PC-3 (cell line): ENCODE measurements at regions of chr9 and their contacts with region 1.

Region 1: DNA sequence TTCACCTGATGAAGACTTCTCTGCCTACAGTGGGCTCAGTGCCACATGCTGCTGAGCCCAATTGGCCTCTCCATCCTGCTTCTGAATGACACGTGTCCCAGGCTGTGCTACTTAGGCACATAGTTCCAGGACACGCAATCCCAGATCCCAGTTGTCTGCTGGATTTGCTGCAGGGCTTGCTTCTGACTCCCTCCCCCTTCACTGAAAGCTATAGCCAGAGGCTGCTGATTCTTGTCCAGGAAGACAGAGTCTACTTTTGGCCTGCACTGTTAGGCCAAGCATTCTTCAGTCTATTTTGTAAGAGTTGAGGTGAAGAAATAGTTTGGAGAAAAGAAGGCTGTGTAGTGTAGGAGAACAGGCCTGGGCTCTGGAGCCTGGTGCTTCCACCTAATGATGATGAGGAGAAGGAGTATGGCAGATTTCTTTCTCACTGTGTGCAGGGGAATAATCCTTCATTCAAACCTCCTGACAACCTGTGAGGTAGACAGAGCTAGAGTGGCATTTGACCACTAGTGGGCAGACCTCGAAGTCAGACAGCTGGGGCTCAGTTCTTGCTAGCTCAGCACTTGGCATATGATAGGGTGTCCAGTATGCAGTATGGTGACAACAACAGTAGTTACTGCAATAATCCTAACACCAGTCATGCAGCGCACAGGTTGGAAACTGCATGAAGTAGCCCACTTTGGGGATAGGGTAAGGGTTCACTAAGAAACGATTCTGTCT is 19.5 kb upstream of the ASPN start:
- DNase-seq: peak; percentile 57
- ATAC-seq: peak; percentile 72
- H3K4me3 ChIP-seq: no peak overlapping the region
- H3K27ac ChIP-seq: no peak overlapping the region
- H3K4me1 ChIP-seq: peaks cover 25% of the 10 kb centered on the region
- H3K27me3 ChIP-seq: no peaks in the 10 kb centered on the region
- CTCF ChIP-seq: peak; percentile 66

Region 2: DNA sequence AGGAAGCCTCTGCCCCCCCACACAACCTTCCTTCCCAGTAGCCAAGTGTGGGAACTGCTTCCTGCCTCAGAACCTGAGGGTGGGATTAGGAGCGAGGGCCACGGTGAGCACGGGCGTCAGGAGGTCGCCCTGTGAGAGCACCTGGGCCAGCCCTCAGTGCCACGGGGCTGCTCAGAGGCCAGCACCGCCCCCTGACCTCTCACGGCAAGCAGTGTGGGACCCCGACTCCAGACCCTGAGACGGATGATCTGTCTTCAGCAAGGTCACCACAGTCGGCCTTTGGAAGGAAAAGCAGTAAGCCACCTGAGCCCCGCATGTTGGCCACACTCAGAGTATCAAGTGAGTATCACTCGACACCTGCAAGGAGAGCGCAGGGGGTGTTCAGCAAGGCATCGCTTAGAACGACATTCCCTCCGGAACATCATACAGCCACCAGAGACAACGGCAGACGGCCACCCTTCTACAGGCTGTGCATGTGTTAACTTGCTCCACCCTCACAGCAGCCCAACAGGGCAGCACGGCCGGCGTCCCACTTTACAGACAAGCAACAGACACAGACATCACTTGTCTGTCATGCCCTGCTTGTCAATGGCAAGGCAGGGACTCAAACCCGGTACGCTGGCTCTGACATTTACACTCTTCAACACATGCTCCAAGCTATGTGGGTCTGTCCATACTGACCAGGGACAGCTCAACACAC is 117.9 kb after region 1 on chr9:
- CTCF ChIA-PET with region 1: no interaction called
- POLR2A ChIA-PET with region 1: no interaction called
- intact Hi-C with region 1: loop called (anchors 10 kb)
- DNase-seq: no peak
- ATAC-seq: no peak
- H3K4me3 ChIP-seq: no peak overlapping the region
- H3K27ac ChIP-seq: no peak overlapping the region
- H3K4me1 ChIP-seq: peaks cover 6% of the 10 kb centered on the region; the same call in 1 of the 2 replicates
- H3K27me3 ChIP-seq: no peaks in the 10 kb centered on the region
- CTCF ChIP-seq: no peak

Region 3: DNA sequence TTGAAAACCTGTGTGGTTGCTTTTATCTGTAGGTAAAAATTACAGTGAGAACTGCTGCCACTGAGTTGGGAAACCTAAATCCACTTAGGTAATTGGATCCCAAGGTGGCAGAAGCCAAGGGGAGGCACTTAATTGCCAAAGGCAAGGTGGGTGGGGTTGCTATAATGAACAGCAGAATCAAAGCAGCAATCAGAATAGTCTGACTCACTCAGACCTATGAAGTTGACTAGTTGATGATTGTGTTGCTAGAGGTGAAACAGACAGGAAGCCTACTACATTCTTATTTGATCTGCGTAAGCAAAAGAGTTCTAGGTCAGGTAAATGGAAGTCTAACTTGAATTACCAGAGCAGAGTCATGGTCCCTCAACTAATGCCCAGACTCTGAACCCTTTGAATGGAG is 280.1 kb after region 1 on chr9:
- CTCF ChIA-PET with region 1: no interaction called
- POLR2A ChIA-PET with region 1: no interaction called
- intact Hi-C with region 1: no loop called
- DNase-seq: peak; percentile 71
- ATAC-seq: peak; percentile 88
- H3K4me3 ChIP-seq: no peak overlapping the region
- H3K27ac ChIP-seq: peak overlapping the region; percentile 75
- H3K4me1 ChIP-seq: peaks cover 14% of the 10 kb centered on the region
- H3K27me3 ChIP-seq: no peaks in the 10 kb centered on the region
- CTCF ChIP-seq: no peak